Endothelial cell of umbilical vein (primary cell): ENCODE measurements at regions of chr5 and their contacts with region 1.

Region 1: DNA sequence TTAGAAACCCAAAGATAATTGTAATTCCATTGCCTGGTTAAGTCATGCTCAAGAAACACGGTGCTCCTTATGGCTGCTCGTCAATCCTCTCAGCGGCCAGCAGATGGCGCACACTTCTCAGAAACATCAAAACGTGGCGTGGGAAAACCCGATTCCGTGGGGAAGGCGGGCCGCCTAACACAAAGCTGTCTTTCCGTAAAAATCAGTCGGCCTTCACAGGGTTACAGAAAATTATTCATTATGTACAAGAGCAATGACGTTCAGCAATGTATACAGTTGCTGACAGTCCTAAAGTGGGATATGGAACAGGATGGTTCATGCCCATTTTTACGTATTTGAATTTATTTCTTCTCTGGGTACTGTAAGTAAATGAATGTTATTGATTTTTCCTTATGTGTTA is 83.5 kb downstream of the PDE4D start:
- DNase-seq: peak; percentile 46
- H3K4me3 ChIP-seq: no peak overlapping the region
- H3K27ac ChIP-seq: no peak overlapping the region
- H3K4me1 ChIP-seq: no peaks in the 10 kb centered on the region
- H3K27me3 ChIP-seq: peaks cover 4 to 17% of the 10 kb centered on the region in 2 experiments
- CTCF ChIP-seq: peak; percentile 80 to 91
- POLR2A ChIP-seq: no peak

Region 2: GRCh38 chr5:60161340-60161934 is 351.4 kb after region 1 on chr5:
- CTCF ChIA-PET with region 1: interaction called, 10 read pairs
- POLR2A ChIA-PET with region 1: no interaction called
- dilution Hi-C with region 1: no loop called
- intact Hi-C with region 1: loop called (anchors 1 kb)
- DNase-seq: peak; percentile 28
- H3K4me3 ChIP-seq: no peak overlapping the region
- H3K27ac ChIP-seq: no peak overlapping the region
- H3K4me1 ChIP-seq: no peaks in the 10 kb centered on the region
- H3K27me3 ChIP-seq: peaks cover 2 to 11% of the 10 kb centered on the region in 2 experiments
- CTCF ChIP-seq: peak; percentile 26 to 47
- POLR2A ChIP-seq: no peak

Region 3: DNA sequence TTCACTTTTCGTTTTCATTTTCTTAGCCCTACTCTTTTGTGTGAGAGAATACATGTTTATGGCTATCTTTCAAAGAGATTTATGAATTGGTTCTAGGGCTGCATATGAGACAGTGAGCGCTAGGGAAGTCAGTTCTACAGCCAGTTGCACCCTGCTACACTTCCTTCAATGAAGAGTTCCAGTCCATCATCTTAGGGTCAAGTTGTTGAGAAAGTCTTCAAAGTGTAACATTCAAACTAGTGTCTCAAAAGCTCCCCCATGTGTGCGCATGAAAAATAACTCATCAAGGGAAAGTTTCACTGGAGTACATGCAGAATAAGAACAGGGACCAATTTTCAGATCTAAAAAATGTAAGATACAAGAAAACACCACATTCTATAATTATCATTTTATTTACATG is 572.7 kb after region 1 on chr5:
- CTCF ChIA-PET with region 1: interaction called, 11 read pairs
- POLR2A ChIA-PET with region 1: no interaction called
- dilution Hi-C with region 1: no loop called
- intact Hi-C with region 1: loop called (anchors 1 kb)
- DNase-seq: peak; percentile 31
- H3K4me3 ChIP-seq: no peak overlapping the region
- H3K27ac ChIP-seq: no peak overlapping the region
- H3K4me1 ChIP-seq: no peaks in the 10 kb centered on the region
- H3K27me3 ChIP-seq: no peaks in the 10 kb centered on the region
- CTCF ChIP-seq: no peak
- POLR2A ChIP-seq: no peak

Region 4: GRCh38 chr5:60649283-60649917 is 839.4 kb after region 1 on chr5:
- CTCF ChIA-PET with region 1: interaction called, 8 read pairs
- POLR2A ChIA-PET with region 1: no interaction called
- dilution Hi-C with region 1: no loop called
- intact Hi-C with region 1: loop called (anchors 1 kb)
- DNase-seq: peak; percentile 48
- H3K4me3 ChIP-seq: no peak overlapping the region
- H3K27ac ChIP-seq: no peak overlapping the region
- H3K4me1 ChIP-seq: no peaks in the 10 kb centered on the region
- H3K27me3 ChIP-seq: no peaks in the 10 kb centered on the region
- CTCF ChIP-seq: peak; percentile 50 to 51
- POLR2A ChIP-seq: no peak

Region 5: DNA sequence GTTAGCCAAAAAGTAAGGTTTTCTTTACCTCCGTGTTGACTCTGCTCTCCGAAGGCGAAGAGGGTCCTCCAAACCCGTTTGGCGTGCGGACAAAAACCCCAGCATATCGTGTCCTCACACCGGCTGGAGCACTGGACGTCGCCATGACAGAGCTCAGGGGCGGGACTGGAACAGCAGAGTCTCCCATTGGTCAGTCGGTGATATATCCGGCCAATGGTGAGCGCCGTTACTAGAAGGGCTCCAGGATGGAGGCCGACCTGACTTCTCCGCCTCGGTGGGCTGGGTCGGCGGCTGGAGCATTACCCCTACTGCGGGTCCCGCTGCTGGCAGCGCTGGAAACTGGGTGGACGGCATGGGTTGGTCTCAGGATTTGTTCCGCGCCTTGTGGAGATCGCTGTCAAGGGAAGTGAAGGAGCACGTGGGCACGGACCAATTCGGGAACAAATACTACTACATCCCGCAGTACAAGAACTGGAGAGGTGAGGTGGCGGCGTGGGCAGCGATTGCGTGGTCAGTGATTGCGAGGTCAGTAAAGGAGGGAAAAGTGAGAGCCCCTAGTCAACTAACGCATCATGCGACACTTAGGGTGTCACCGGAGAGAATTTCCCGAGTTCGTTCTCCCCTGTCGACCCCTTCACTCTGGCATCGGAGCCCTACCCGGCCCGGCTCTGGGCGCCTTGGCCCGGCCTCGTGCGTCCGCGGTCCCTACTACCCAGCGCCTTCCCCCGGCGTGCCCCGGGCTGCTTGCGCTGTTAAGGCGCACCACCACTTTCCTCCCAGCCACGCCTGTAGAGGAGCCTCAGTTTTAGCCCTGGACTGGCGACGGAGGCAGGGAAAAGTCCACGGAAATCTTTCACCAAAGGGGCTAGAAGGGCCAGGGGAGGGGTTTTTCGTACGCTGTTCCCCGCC is 1135.1 kb after region 1 on chr5 and contains the starts of genes ERCC8 and NDUFAF2:
- CTCF ChIA-PET with region 1: no interaction called
- POLR2A ChIA-PET with region 1: no interaction called
- dilution Hi-C with region 1: no loop called
- intact Hi-C with region 1: loop called (anchors 10 kb)
- DNase-seq: peak; percentile 95
- H3K4me3 ChIP-seq: peak within 1 kb of the TSS; percentile 71 to 94 (median 78)
- H3K27ac ChIP-seq: peak within 1 kb of the TSS; percentile 21
- H3K4me1 ChIP-seq: peaks cover 21% of the 10 kb centered on the region
- H3K27me3 ChIP-seq: no peaks in the 10 kb centered on the region
- CTCF ChIP-seq: no peak
- POLR2A ChIP-seq: peak; percentile 63
- total RNA-seq, gene ERCC8: 10.4 and 12.8 TPM in 2 replicates
- total RNA-seq, gene NDUFAF2: 39.9 and 42.4 TPM in 2 replicates